T-cell (primary cell): ENCODE measurements at regions of chr1 and their contacts with region 1.

Region 1: DNA sequence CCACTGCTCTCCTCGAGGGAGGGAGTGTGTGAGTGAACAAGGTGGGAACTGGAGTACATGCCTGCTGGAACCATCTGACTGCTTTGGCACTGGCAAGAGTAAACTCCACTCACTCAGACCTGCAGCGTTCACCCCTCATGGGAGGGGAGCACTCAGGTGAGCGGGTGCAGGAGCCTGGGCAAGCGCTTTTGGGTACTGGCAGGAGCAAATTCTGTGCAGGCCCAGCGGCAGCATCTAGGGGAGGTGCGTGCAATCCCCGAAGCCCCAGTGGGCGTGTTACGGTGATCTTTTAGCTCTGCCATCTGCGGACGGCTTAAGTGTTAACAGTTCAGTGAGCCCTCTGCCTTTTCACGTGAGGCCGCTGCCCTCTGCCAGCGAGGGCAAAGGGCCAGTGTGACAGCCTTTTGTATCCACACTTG is 127.4 kb downstream of the PATJ start:
- DNase-seq: no peak
- ATAC-seq: no peak
- H3K4me3 ChIP-seq: no peak overlapping the region
- H3K4me3 Mint-ChIP-seq: no peak overlapping the region
- H3K27ac ChIP-seq: no peak overlapping the region
- H3K27ac Mint-ChIP-seq: no peak overlapping the region
- H3K4me1 ChIP-seq: no peaks in the 10 kb centered on the region
- H3K4me1 Mint-ChIP-seq: no peaks in the 10 kb centered on the region
- H3K27me3 ChIP-seq: no peaks in the 10 kb centered on the region
- H3K27me3 Mint-ChIP-seq: no peaks in the 10 kb centered on the region

Region 2: GRCh38 chr1:61921435-61921834 is 51.7 kb after region 1 on chr1:
- CTCF ChIA-PET with region 1: no interaction called
- POLR2A ChIA-PET with region 1: interaction called in 1 of 2 experiments, 10 read pairs
- DNase-seq: no peak
- ATAC-seq: no peak
- H3K4me3 ChIP-seq: no peak overlapping the region
- H3K4me3 Mint-ChIP-seq: no peak overlapping the region
- H3K27ac ChIP-seq: no peak overlapping the region
- H3K27ac Mint-ChIP-seq: no peak overlapping the region
- H3K4me1 ChIP-seq: no peaks in the 10 kb centered on the region
- H3K4me1 Mint-ChIP-seq: no peaks in the 10 kb centered on the region
- H3K27me3 ChIP-seq: no peaks in the 10 kb centered on the region
- H3K27me3 Mint-ChIP-seq: no peaks in the 10 kb centered on the region

Region 3: DNA sequence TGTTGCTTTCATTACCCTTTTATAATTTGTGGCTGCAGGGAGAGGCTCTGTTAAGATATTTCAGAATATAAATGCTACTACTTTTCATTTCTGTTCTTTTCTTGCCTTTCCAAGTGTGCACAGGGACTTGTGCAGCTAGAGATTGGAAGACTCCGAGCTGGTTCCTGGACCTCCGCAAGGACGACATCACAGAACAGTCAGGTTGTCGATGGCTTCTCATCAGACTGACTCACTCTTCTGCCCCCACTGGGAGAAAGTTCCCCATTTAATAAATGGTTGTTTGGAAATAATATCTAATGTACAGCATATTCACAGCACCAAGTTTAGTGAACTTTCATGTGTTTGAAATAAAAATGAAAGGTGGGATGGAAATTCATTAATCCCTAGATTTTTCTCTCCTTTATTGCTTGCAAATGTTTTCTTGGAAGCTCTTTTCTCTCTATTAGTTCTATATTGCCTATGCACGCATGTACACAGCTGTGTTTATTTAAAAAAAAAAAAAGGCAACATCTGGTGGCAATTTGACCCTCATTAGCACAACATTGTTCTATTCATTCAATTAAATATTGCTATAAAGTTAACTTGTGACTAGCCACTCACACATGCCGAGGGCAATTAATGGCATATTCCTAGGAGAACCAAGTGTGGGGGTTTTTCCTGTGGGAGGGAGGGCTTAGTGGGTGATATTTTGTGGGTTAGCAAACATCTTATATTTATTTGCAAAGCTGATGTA is 247.5 kb after region 1 on chr1:
- CTCF ChIA-PET with region 1: no interaction called
- POLR2A ChIA-PET with region 1: no interaction called
- DNase-seq: no peak
- ATAC-seq: no peak
- H3K4me3 ChIP-seq: no peak overlapping the region
- H3K4me3 Mint-ChIP-seq: no peak overlapping the region
- H3K27ac ChIP-seq: no peak overlapping the region
- H3K27ac Mint-ChIP-seq: no peak overlapping the region
- H3K4me1 ChIP-seq: no peaks in the 10 kb centered on the region
- H3K4me1 Mint-ChIP-seq: no peaks in the 10 kb centered on the region
- H3K27me3 ChIP-seq: no peaks in the 10 kb centered on the region
- H3K27me3 Mint-ChIP-seq: no peaks in the 10 kb centered on the region